ENCODE measurements at regions of chr1 and their contacts with region 1.

Region 1: GRCh38 chr1:54421101-54421504 is 14.9 kb upstream of the SSBP3 start:
- DNase-seq: peak in 4 of 6 donors; percentile 50 to 82 (median 76)
- ATAC-seq: peak; percentile 88 to 95 (median 89)
- H3K4me3 ChIP-seq: no peak overlapping the region
- H3K27ac ChIP-seq: no peak overlapping the region
- H3K4me1 ChIP-seq: no peaks in the 10 kb centered on the region
- H3K27me3 ChIP-seq: no peaks in the 10 kb centered on the region
- CTCF ChIP-seq: no peak

Region 2: DNA sequence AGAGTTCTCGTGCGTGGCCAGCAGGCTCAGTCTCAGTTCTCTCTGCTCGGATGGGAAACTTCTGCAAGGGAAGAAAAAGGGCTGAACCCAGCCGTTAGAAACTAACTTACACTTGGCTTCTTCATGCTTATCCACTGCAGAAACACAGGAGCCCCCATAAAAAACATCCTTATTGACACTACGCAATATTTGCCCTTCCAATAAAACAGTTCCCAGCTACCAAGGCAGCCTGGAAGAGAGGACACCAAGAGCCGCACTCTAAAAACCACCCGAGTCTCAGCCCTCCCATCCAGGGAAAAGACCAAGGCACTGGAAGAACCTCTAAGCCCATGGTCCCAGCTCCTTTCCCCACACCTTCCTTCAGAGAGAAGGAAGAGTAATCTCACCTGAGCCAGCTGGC is 76.0 kb before region 1 on chr1:
- intact Hi-C with region 1: no loop called
- DNase-seq: no peak
- ATAC-seq: no peak
- H3K4me3 ChIP-seq: no peak overlapping the region
- H3K27ac ChIP-seq: no peak overlapping the region
- H3K4me1 ChIP-seq: peaks cover 0 to 20% (median 13%) of the 10 kb centered on the region in 3 donors
- H3K27me3 ChIP-seq: no peaks in the 10 kb centered on the region
- CTCF ChIP-seq: no peak

Region 3: GRCh38 chr1:54355931-54356679 is 65.0 kb before region 1 on chr1:
- intact Hi-C with region 1: no loop called
- DNase-seq: peak in 5 of 6 donors; percentile 45 to 75 (median 60)
- ATAC-seq: peak; percentile 68 to 76 (median 72)
- H3K4me3 ChIP-seq: peak overlapping the region in 2 of 4 donors; percentile 18 to 40
- H3K27ac ChIP-seq: peak overlapping the region in 2 of 4 donors; percentile 3 to 22
- H3K4me1 ChIP-seq: peaks cover 7 to 25% (median 15%) of the 10 kb centered on the region in 3 donors
- H3K27me3 ChIP-seq: no peaks in the 10 kb centered on the region
- CTCF ChIP-seq: no peak

Region 4: GRCh38 chr1:54459726-54460191 is 38.7 kb after region 1 on chr1:
- intact Hi-C with region 1: loop called in 1 of 3 experiments (anchors 2 kb)
- DNase-seq: peak in 1 of 6 donors; percentile 39
- ATAC-seq: peak in 2 of 4 donors; percentile 26 to 31
- H3K4me3 ChIP-seq: no peak overlapping the region
- H3K27ac ChIP-seq: no peak overlapping the region
- H3K4me1 ChIP-seq: peaks cover 0 to 3% (median 0%) of the 10 kb centered on the region in 3 donors
- H3K27me3 ChIP-seq: no peaks in the 10 kb centered on the region
- CTCF ChIP-seq: no peak